Right ventricle myocardium inferior (tissue), 1 donor: ENCODE measurements at regions of chr9 and their contacts with region 1.

Region 1: GRCh38 chr9:92293452-92294296 is at the start of gene IARS1:
- DNase-seq: peak; percentile 99
- ATAC-seq: peak; percentile 100
- total RNA-seq, gene IARS1: 54.7 TPM

Region 2: DNA sequence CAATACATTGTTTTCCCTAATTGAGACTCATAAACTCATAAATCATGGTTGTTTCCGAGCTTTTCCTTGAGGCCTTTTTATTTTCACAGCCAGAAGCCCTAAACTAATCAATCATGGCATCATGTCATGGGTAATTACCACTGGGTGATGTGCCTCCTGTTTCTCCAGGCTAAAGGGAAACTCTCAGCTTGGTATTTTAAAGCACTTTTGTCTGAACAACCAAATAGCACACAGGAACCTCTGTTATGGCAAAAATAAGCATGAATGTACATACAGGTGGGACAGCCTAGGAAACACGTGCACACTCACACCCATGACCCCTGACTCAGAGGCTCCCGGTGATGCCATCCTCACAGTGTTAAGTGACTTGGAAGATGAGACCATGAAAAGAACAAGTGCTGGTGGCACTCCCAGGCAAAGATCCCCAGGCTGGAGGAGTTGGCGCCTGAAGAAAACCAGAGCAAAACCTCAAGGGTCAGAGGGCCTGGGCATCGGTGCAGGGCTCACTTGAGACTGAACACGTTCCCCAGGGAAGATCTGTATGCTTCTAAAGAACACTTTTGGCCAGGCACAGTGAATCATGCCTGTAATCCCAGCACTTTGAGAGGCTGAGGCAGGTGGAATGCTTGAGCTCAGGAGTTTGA is 498.0 kb before region 1 on chr9:
- intact Hi-C with region 1: no loop called
- DNase-seq: peak; percentile 31
- ATAC-seq: no peak

Region 3: GRCh38 chr9:92254381-92255337 is 39.0 kb before region 1 on chr9:
- intact Hi-C with region 1: loop called (anchors 5 kb)
- DNase-seq: peak; percentile 25
- ATAC-seq: no peak

Region 4: DNA sequence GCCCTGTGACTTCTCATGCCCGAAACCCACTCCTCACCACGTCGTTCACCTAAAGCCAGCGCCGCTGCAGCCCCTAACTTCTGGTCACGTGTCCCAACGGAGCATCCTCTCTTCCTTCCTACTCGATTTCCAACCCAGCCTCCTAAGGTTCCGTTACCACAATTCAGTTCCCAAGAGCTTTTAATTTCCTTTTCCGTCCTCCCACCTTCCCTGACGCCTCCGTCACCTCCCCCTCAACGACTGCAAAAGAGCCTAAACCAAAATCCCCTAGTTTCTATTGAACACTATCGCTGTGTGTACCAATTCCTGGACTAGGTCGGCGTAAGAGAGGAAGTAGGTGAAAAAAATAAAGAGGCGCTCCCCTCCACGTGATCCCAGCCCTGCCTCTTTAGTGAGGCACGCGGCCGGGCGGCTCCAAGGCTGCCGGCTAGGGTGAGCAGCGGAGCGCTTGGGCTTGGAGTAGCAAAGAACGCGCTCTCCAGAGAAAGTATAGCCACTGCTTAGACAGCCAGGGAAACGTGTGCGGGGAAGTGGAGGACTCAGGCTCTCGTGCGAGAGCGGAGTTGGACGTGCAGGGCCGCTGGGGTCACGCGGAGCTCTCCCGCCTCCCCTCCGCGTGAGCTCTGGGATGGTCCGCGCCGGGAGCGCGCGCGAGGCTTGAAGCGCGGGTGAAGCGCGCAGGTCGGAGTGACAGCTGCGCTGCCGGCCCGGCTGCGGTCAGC is 31.8 kb after region 1 on chr9 and contains the starts of genes CENPP and NOL8:
- intact Hi-C with region 1: loop called (anchors 1 kb)
- DNase-seq: peak; percentile 93
- ATAC-seq: peak; percentile 98
- total RNA-seq, gene CENPP: 3.3 TPM
- total RNA-seq, gene NOL8: 14.2 TPM